ENCODE measurements at regions of chr11 and their contacts with region 1.

Region 1: DNA sequence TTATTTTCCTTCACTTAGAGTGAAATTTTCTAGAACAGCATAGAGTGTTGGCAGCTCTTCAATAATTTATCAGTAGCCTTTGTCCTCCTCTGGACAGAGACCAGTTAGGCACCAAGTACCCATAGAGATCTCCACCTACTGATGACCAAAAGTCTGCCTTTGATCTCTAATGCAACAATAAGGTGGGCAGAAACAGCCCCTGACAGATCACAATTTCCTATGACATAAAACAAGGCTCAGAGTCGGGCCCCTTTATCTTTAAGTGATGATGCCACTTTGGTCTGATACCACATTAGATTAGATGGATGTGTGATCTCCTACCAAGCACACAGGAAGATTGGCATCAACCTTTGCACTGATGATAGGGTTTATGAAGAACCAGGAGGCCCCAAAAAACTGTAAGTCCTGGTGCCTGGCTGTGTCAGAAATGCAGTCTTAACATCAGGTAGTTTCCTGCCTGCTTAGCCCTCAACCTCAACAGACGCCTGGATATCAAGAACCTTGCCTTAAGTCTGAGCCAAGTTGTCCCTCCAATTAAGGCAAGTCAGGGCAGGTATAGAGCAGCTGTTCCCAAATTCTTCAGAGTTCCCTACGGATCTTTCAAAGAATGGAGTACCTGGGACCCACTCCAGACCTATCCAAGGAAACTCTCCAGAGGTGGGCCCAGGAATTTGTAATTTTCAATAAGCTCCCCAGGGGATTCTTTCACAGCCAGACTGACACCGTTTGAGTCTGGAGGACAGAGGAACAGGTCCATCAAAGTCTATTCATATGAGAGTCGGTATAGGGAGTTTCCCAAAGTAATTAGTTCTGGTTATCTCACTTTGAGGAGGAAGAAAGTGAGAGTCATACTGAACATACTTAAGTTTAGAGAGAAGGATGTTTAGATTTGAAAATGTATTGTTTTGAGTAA is 30.6 kb upstream of the TMPRSS4 start:
- H3K4me3 Mint-ChIP-seq: no peak overlapping the region
- H3K27ac Mint-ChIP-seq: peak overlapping the region; percentile 43
- H3K4me1 Mint-ChIP-seq: peaks cover 59% of the 10 kb centered on the region
- H3K27me3 Mint-ChIP-seq: no peaks in the 10 kb centered on the region

Region 2: DNA sequence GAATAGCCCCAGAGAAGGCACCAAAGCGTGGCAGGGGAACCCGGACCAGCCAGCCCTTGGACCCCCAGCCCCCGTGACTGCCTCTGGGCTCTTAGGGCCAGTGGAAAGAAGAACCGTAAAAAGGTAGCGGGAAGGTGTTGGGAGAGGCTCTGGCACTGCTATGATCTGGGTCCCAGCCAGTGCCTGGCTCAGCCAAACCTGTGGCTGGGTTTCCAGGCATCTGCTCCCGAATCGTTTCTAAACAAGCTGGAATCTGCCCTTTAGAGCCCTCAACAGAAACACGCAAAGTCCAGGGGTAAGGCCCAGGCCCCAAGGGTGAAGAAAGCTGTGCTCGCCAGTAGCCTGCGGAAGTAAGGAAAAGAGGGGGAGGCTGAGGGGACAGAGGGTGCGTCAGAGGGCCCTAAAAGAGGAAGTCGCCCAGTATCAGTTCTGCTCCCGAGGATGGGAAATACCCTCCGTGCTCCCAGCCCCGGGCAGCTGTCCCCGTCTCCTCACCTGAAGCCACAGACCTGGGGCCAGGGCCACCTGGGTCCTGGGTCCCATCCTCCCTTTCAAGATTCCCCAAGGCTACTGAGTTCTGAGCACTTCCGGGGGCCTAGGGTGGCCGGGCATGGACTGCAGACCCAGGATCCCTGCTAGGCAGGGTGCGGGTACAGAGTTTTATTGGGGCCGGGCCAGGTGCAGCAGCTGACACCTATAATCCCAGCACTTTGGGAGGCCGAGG is 35.4 kb before region 1 on chr11:
- intact Hi-C with region 1: loop called (anchors 5 kb)
- H3K4me3 Mint-ChIP-seq: peak overlapping the region; percentile 49
- H3K27ac Mint-ChIP-seq: peak overlapping the region; percentile 92
- H3K4me1 Mint-ChIP-seq: peaks cover 99% of the 10 kb centered on the region
- H3K27me3 Mint-ChIP-seq: no peaks in the 10 kb centered on the region

Region 3: DNA sequence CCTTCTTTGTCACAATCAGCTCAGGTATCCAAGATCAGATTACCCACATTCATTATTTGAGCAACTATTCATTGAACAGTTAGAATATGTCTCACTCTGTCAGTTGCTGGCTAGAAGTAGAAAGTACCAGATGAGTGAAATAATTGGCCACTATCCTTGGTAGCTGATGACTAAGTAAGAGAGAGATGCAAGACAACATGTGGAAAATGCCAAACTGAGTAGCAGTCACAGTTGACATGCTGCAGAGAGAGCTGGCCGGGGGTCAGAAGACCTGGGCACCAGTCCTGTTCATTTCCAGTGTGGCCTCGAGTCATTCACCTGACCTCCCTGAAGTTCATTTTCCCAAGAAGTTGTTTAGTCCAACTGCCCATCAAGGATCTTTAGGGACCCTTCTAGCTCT is 62.9 kb after region 1 on chr11:
- intact Hi-C with region 1: no loop called
- H3K4me3 Mint-ChIP-seq: no peak overlapping the region
- H3K27ac Mint-ChIP-seq: no peak overlapping the region
- H3K4me1 Mint-ChIP-seq: peaks cover 2% of the 10 kb centered on the region
- H3K27me3 Mint-ChIP-seq: peaks cover 7% of the 10 kb centered on the region